ENCODE measurements at regions of chr11 and their contacts with region 1.

Region 1: DNA sequence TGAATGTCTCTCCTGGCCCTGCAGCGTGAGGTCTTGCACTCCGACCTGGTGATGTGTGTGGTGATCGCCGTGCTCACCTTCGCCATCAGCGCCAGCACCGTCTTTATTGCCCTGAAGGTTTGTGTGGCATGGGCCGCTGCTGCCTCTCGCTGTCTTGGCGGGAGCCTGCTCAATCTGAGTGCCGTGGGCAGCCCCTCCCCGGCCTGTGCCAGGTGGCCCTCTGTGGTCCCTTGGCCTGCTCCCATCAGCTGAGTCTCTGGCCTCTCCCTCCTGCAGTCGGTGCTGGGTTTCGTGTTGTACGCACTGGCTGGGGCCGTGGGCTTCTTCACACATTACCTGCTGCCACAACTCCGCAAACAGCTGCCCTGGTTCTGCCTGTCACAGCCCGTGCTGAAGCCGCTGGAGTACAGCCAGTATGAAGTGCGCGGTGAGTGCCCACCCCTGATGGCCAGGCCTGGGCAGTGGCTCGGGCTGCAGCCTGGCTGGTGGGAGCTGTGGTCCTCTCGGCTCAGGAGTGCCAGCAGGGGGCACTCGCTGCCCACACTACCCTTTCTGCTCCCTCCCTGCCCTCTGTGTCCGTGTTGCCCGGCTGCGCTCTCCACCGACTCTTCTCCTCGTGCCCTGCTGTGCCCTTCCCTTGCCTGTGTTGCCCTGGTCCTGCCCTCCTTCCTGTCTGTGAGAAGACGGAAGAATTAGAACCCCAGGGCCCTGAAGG is 10.2 kb downstream of the PCNX3 start:
- DNase-seq: peak in 4 of 5 donors; percentile 57 to 65 (median 62)
- H3K4me3 ChIP-seq: no peak overlapping the region
- H3K4me3 Mint-ChIP-seq: no peak overlapping the region
- H3K27ac ChIP-seq: no peak overlapping the region
- H3K27ac Mint-ChIP-seq: peak overlapping the region in 3 of 7 donors; percentile 60 to 85 (median 73)
- H3K4me1 ChIP-seq: no peaks in the 10 kb centered on the region
- H3K4me1 Mint-ChIP-seq: peaks cover 6 to 18% (median 6%) of the 10 kb centered on the region in 4 donors
- H3K27me3 ChIP-seq: no peaks in the 10 kb centered on the region
- H3K27me3 Mint-ChIP-seq: no peaks in the 10 kb centered on the region

Region 2: GRCh38 chr11:65522640-65523322 is 103.0 kb before region 1 on chr11:
- CTCF ChIA-PET with region 1: no interaction called
- POLR2A ChIA-PET with region 1: no interaction called
- intact Hi-C with region 1: no loop called
- DNase-seq: peak in 4 of 5 donors; percentile 35 to 68 (median 50)
- H3K4me3 ChIP-seq: peak overlapping the region in 1 of 2 donors; percentile 34
- H3K4me3 Mint-ChIP-seq: peak overlapping the region; percentile 54 to 92 (median 84)
- H3K27ac ChIP-seq: peak overlapping the region; percentile 67
- H3K27ac Mint-ChIP-seq: peak overlapping the region; percentile 81 to 98 (median 94)
- H3K4me1 ChIP-seq: peaks cover 45% of the 10 kb centered on the region
- H3K4me1 Mint-ChIP-seq: peaks cover 29 to 51% (median 41%) of the 10 kb centered on the region in 4 donors
- H3K27me3 ChIP-seq: no peaks in the 10 kb centered on the region
- H3K27me3 Mint-ChIP-seq: no peaks in the 10 kb centered on the region

Region 3: GRCh38 chr11:65574109-65574810 is 51.5 kb before region 1 on chr11:
- CTCF ChIA-PET with region 1: no interaction called
- POLR2A ChIA-PET with region 1: no interaction called
- intact Hi-C with region 1: no loop called
- DNase-seq: peak; percentile 81 to 92 (median 84)
- H3K4me3 ChIP-seq: peak overlapping the region; percentile 75 to 89
- H3K4me3 Mint-ChIP-seq: peak overlapping the region; percentile 93 to 99 (median 96)
- H3K27ac ChIP-seq: peak overlapping the region; percentile 99
- H3K27ac Mint-ChIP-seq: peak overlapping the region; percentile 97 to 99 (median 98)
- H3K4me1 ChIP-seq: peaks cover 69% of the 10 kb centered on the region
- H3K4me1 Mint-ChIP-seq: peaks cover 30 to 84% (median 58%) of the 10 kb centered on the region in 4 donors
- H3K27me3 ChIP-seq: no peaks in the 10 kb centered on the region
- H3K27me3 Mint-ChIP-seq: peaks cover 0 to 3% of the 10 kb centered on the region in 2 donors

Region 4: DNA sequence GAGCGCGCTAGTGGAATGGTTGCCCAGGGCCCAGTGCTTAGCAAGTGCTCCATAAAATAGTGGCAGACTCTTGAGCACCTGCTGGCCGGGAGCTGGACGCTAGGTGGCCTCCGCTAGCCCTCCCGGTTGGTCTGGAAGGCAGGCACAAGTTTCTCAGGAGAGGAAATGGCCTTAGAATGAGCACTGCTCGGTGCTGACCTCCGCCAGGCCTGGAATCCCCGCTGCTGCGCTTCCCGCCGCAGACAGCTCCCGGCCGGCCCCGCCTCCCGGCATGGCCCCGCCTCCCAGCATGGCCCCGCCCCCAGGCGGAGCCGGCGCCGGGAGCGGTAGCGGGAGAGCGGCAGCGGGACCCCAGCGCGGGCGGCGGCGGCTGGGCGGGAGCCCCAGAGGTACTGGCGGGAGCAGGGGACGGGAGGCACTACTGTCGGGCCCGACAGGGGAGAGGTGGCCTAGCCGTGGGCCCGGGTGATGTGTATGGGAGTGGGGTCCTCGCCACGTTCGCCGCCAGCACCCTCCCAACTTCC is 12.1 kb after region 1 on chr11 and contains the start of gene SIPA1:
- CTCF ChIA-PET with region 1: interaction called, 19 read pairs
- POLR2A ChIA-PET with region 1: interaction called, 34 read pairs
- intact Hi-C with region 1: no loop called
- DNase-seq: peak; percentile 63 to 85 (median 74)
- H3K4me3 ChIP-seq: peak within 1 kb of the TSS; percentile 72 to 86
- H3K4me3 Mint-ChIP-seq: peak within 1 kb of the TSS; percentile 90 to 98 (median 96)
- H3K27ac ChIP-seq: peak within 1 kb of the TSS; percentile 94
- H3K27ac Mint-ChIP-seq: peak within 1 kb of the TSS; percentile 97 to 100 (median 99)
- H3K4me1 ChIP-seq: peaks cover 71% of the 10 kb centered on the region
- H3K4me1 Mint-ChIP-seq: peaks cover 24 to 68% (median 46%) of the 10 kb centered on the region in 4 donors
- H3K27me3 ChIP-seq: no peaks in the 10 kb centered on the region
- H3K27me3 Mint-ChIP-seq: no peaks in the 10 kb centered on the region
- total RNA-seq, gene SIPA1: 150 to 169 TPM

Region 5: DNA sequence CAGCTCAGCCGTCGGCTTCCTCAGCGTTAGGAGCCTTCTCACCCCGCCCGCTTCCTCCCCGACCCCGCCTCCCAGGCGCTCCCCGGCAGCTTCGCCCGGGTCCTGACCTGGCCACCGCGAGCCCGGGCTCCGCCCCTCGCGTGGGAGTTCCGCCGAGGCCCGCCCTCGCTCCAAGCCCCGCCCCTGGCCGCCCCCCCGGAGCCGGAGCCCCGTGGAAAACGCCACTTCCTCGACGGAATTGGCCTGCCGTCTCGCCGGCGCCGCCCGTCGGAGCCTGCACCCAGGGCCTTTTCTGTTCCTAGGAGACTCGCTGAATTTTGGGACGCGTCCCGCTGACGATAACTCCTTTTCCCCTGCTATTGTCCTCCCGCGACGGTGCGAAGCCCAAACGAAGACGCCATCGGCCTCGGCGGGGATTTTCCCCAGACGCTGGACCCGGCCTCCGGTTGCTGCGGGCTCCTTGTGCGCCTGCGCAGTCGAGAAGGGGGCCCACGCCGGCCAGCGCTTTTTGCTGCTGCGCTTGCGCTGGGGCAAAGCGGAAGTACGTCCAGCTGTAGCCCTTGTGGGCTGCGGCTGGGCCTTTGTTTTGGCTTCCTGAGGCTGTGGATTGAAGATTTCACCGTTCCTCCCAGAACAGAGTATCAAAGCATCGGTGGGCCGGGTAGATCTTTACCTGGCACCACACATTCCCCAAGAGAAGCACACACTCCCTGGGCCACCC is 26.9 kb after region 1 on chr11:
- CTCF ChIA-PET with region 1: interaction called, 11 read pairs
- POLR2A ChIA-PET with region 1: interaction called, 19 read pairs
- intact Hi-C with region 1: no loop called
- DNase-seq: peak; percentile 95 to 99 (median 97)
- H3K4me3 ChIP-seq: peak overlapping the region; percentile 50 to 64
- H3K4me3 Mint-ChIP-seq: peak overlapping the region; percentile 88 to 95 (median 91)
- H3K27ac ChIP-seq: peak overlapping the region; percentile 91
- H3K27ac Mint-ChIP-seq: peak overlapping the region; percentile 96 to 99 (median 98)
- H3K4me1 ChIP-seq: peaks cover 35% of the 10 kb centered on the region
- H3K4me1 Mint-ChIP-seq: peaks cover 34 to 59% (median 48%) of the 10 kb centered on the region in 4 donors
- H3K27me3 ChIP-seq: no peaks in the 10 kb centered on the region
- H3K27me3 Mint-ChIP-seq: no peaks in the 10 kb centered on the region

Region 6: DNA sequence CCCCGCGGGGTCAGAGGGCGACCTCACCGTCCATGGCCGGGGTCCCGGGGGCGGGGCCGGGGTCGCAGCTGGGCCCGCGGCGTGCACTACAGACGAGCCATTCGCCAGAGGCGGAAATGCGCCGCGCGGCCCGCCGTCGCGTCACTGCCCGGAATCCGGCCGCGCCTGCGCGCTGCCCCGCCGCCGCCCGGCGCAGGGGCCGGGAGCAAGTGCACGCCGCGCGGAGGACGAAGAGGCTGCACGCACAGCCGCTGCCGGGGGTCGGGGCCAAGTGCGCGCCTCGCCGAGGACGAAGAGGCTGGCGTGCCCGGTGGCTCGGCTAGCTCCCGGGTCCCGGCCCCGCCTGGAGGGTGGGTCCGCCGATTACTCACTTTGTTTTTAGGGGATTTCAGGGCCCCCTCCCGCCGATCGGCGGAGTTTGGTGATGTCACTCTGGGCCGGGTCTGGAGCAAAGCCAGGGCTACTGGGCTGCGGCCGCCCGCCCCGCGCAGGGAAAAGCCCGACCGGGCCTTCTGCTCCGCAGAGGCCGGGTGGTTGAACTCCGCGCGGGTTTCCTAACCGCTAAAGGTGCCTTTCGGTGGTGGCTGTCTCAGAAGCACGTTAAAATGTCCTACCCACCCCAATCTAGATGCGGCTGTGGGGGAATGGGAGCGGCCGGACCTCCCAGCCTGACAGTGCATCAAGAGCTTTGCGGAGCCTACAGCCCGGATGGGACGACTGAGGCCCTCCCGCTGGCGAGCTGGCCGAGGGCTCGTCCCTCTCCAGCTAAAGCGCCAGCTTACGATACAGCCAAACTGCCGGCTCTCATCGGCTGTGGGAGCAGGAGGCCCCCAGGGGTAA is 37.2 kb after region 1 on chr11 and contains the start of gene RELA:
- CTCF ChIA-PET with region 1: interaction called, 10 read pairs
- POLR2A ChIA-PET with region 1: interaction called, 6 read pairs
- intact Hi-C with region 1: loop called (anchors 1 kb)
- DNase-seq: peak; percentile 87 to 95 (median 91)
- H3K4me3 ChIP-seq: peak within 1 kb of the TSS; percentile 96 to 97
- H3K4me3 Mint-ChIP-seq: peak within 1 kb of the TSS; percentile 89 to 95 (median 90)
- H3K27ac ChIP-seq: peak within 1 kb of the TSS; percentile 98
- H3K27ac Mint-ChIP-seq: peak within 1 kb of the TSS; percentile 96 to 98 (median 96)
- H3K4me1 ChIP-seq: peaks cover 38% of the 10 kb centered on the region
- H3K4me1 Mint-ChIP-seq: peaks cover 20 to 45% (median 33%) of the 10 kb centered on the region in 4 donors
- H3K27me3 ChIP-seq: no peaks in the 10 kb centered on the region
- H3K27me3 Mint-ChIP-seq: no peaks in the 10 kb centered on the region
- total RNA-seq, gene RELA: 170 to 173 TPM